Vagina (tissue), 2 donors: ENCODE measurements at regions of chr2 and their contacts with region 1.

Region 1: DNA sequence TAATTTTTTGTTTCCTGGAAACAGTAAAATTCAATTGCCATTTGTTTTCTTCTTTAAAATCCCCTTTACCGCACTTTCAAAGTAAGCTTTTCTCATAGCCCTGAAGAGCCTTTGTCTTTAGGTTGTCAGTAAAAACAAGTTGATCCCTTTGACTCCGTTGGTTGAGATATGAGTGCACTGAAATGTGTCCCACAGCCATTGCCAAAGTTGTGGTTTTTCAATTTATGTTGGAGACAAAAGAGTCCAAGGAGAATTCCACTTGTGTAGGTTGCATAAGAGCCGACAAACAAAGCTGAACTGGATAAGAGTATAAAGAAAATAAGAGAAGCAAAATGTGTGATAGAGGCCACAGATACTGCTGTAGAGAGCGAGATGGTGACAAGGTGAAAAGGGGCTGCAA is 26.1 kb upstream of the HNMT start:
- DNase-seq: no peak
- H3K4me3 ChIP-seq: no peak overlapping the region
- H3K27ac ChIP-seq: no peak overlapping the region
- H3K4me1 ChIP-seq: no peaks in the 10 kb centered on the region
- H3K27me3 ChIP-seq: no peaks in the 10 kb centered on the region
- CTCF ChIP-seq: no peak
- POLR2A ChIP-seq: no peak

Region 2: GRCh38 chr2:137644731-137645130 is 293.5 kb before region 1 on chr2:
- intact Hi-C with region 1: no loop called
- DNase-seq: no peak
- H3K4me3 ChIP-seq: no peak overlapping the region
- H3K27ac ChIP-seq: no peak overlapping the region
- H3K4me1 ChIP-seq: no peaks in the 10 kb centered on the region
- H3K27me3 ChIP-seq: no peaks in the 10 kb centered on the region
- CTCF ChIP-seq: no peak
- POLR2A ChIP-seq: no peak

Region 3: GRCh38 chr2:138086611-138087010 is 148.4 kb after region 1 on chr2:
- intact Hi-C with region 1: loop called (anchors 10 kb)
- DNase-seq: no peak
- H3K4me3 ChIP-seq: no peak overlapping the region
- H3K27ac ChIP-seq: no peak overlapping the region
- H3K4me1 ChIP-seq: no peaks in the 10 kb centered on the region
- H3K27me3 ChIP-seq: no peaks in the 10 kb centered on the region
- CTCF ChIP-seq: no peak
- POLR2A ChIP-seq: no peak